Ascending aorta (tissue), 2 donors: ENCODE measurements at regions of chr16 and their contacts with region 1.

Region 1: GRCh38 chr16:14300705-14301168 is 229.6 kb downstream of the MRTFB start:
- DNase-seq: peak in 1 of 2 donors; percentile 90
- H3K4me3 ChIP-seq: peak overlapping the region; percentile 97 to 98
- H3K27ac ChIP-seq: peak overlapping the region; percentile 81 to 83
- H3K4me1 ChIP-seq: peaks cover 0 to 9% of the 10 kb centered on the region in 2 donors
- H3K27me3 ChIP-seq: no peaks in the 10 kb centered on the region
- CTCF ChIP-seq: peak; percentile 66 to 72 (median 69)

Region 2: DNA sequence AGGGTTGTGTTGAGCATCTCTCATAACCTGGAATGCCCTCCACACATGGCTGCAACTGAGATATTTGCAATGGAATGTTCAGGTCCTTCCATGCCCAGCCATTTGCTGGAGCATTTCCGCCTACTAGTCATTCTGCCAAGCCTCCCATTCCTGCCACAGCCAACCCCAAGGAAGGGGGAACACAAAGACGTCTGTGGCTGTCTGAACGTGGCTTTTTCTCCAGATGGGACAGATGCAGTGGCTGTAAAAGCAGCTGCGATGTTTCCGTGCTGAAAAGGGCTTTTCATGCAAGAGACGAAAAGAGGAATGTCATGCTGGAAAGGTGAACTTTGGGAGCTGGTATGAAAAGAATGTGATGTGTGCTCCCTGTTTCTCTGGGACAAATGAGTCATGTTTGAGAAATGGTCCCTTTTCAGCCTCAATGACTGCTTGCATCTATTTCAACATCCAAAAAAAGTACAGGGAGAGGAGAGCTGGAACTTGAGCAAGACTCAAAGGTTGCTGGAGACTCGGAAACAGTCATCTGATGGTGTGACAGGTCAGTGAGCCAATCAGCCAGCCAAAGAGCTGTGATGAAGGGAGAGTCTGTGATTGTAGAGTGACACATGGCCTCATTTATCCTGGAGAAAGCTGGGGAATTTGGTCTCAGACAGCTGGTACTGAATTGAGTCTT is 1190.5 kb before region 1 on chr16:
- intact Hi-C with region 1: loop called (anchors 5 kb)
- DNase-seq: peak; percentile 12 to 91
- H3K4me3 ChIP-seq: no peak overlapping the region
- H3K27ac ChIP-seq: peak overlapping the region; percentile 74 to 83
- H3K4me1 ChIP-seq: peaks cover 4 to 18% of the 10 kb centered on the region in 2 donors
- H3K27me3 ChIP-seq: no peaks in the 10 kb centered on the region
- CTCF ChIP-seq: no peak

Region 3: GRCh38 chr16:14362774-14363371 is 62.1 kb after region 1 on chr16:
- intact Hi-C with region 1: loop called (anchors 2 kb)
- DNase-seq: no peak
- H3K4me3 ChIP-seq: no peak overlapping the region
- H3K27ac ChIP-seq: no peak overlapping the region
- H3K4me1 ChIP-seq: peaks cover 0 to 3% of the 10 kb centered on the region in 2 donors
- H3K27me3 ChIP-seq: no peaks in the 10 kb centered on the region
- CTCF ChIP-seq: no peak

Region 4: GRCh38 chr16:14501331-14502255 is 200.9 kb after region 1 on chr16:
- intact Hi-C with region 1: loop called (anchors 2 kb)
- DNase-seq: peak; percentile 66 to 93
- H3K4me3 ChIP-seq: peak overlapping the region in 1 of 2 donors; percentile 33
- H3K27ac ChIP-seq: peak overlapping the region; percentile 77 to 84
- H3K4me1 ChIP-seq: peaks cover 10 to 25% of the 10 kb centered on the region in 2 donors
- H3K27me3 ChIP-seq: no peaks in the 10 kb centered on the region
- CTCF ChIP-seq: no peak

Region 5: GRCh38 chr16:14632692-14633569 is 332.2 kb after region 1 on chr16 and contains the start of gene BFAR:
- intact Hi-C with region 1: loop called (anchors 5 kb)
- DNase-seq: peak; percentile 97 to 100
- H3K4me3 ChIP-seq: peak within 1 kb of the TSS; percentile 89 to 98
- H3K27ac ChIP-seq: peak within 1 kb of the TSS; percentile 96 to 97
- H3K4me1 ChIP-seq: peaks cover 7 to 19% of the 10 kb centered on the region in 2 donors
- H3K27me3 ChIP-seq: no peaks in the 10 kb centered on the region
- CTCF ChIP-seq: peak in 1 of 3 experiments; percentile 10
- total RNA-seq, gene BFAR: 28.0 TPM